Activated CD8-positive, alpha-beta T cell treated with anti-CD3 and anti-CD28 coated beads, Interleukin-2, amount 10 ng/mL, durations not matched to agents 7 days and 5 days (primary cell): ENCODE measurements at regions of chr12 and their contacts with region 1.

Region 1: GRCh38 chr12:122752464-122753318 is at the start of gene DENR:
- DNase-seq: peak; percentile 99
- ATAC-seq: peak; percentile 96
- H3K4me3 Mint-ChIP-seq: peak within 1 kb of the TSS; percentile 97
- H3K27ac Mint-ChIP-seq: peak within 1 kb of the TSS; percentile 97
- H3K4me1 Mint-ChIP-seq: peaks cover 42% of the 10 kb centered on the region
- H3K27me3 Mint-ChIP-seq: no peaks in the 10 kb centered on the region
- total RNA-seq, gene DENR: 54.6 to 54.9 TPM

Region 2: GRCh38 chr12:122368361-122369073 is 384.2 kb before region 1 on chr12:
- CTCF ChIA-PET with region 1: no interaction called
- POLR2A ChIA-PET with region 1: no interaction called
- DNase-seq: no peak
- ATAC-seq: no peak
- H3K4me3 Mint-ChIP-seq: no peak overlapping the region
- H3K27ac Mint-ChIP-seq: no peak overlapping the region
- H3K4me1 Mint-ChIP-seq: peaks cover 17% of the 10 kb centered on the region
- H3K27me3 Mint-ChIP-seq: no peaks in the 10 kb centered on the region

Region 3: GRCh38 chr12:122642009-122642408 is 110.7 kb before region 1 on chr12:
- CTCF ChIA-PET with region 1: interaction called, 18 read pairs
- POLR2A ChIA-PET with region 1: interaction called, 4 read pairs
- DNase-seq: no peak
- ATAC-seq: no peak
- H3K4me3 Mint-ChIP-seq: no peak overlapping the region
- H3K27ac Mint-ChIP-seq: no peak overlapping the region
- H3K4me1 Mint-ChIP-seq: peaks cover 7% of the 10 kb centered on the region
- H3K27me3 Mint-ChIP-seq: no peaks in the 10 kb centered on the region